CD4-positive, alpha-beta T cell (primary cell): ENCODE measurements at regions of chr6 and their contacts with region 1.

Region 1: DNA sequence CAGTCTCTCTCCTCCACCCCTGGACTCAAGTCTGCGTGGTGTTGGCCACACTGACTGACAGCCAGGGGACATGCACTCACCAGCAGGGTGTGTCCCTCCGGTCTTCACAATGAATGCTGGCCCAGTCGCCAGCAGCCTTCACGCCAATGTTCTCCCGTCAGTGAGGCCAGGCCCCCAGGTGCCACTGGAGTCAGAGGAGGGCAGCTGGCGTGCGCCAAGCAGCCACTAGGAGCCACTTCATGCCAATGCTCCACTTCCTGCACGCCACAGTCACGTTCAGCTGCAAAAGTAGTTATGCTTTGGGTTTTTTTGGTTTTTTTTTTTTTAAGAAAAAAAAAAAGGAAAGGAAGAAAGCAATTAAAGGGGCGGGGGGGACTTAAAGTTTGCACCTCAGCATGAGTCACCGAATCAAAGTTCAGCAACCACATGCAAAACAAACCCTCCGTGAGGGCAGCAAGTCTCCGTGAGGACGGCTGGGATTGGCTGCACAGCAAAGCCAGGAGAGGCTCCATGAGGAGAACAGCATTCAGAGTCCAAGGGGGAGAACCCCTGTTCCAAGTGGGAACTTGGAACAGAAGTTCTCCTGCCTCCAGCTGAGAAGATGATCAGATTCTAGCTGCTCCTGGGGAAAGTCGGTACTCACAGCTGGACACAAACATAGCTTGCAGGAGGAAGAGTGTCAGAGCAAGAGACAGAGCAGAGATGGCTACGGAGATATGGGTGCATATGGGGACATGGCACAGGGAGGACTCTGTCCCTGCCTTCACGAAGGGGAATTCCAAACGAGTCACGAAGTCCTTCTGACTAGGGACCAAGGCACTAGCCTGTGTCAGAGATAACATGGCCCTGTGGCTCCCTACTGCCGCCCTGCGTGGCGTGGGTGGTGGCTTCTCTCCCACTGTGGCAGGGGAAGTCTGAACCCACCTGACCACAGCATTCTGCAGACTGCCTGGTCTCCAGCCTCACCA is at the start of gene ZC3H12D:
- DNase-seq: peak; percentile 74 to 95 (median 81)
- ATAC-seq: peak; percentile 77
- H3K4me3 ChIP-seq: peak within 1 kb of the TSS; percentile 68
- H3K4me3 Mint-ChIP-seq: peak within 1 kb of the TSS; percentile 92
- H3K27ac ChIP-seq: peak within 1 kb of the TSS; percentile 91 to 97
- H3K27ac Mint-ChIP-seq: peak within 1 kb of the TSS; percentile 99
- H3K4me1 ChIP-seq: peaks cover 75% of the 10 kb centered on the region
- H3K4me1 Mint-ChIP-seq: peaks cover 61% of the 10 kb centered on the region
- H3K27me3 ChIP-seq: no peaks in the 10 kb centered on the region
- H3K27me3 Mint-ChIP-seq: no peaks in the 10 kb centered on the region
- CTCF ChIP-seq: peak; percentile 76
- total RNA-seq, gene ZC3H12D: 70.2 to 71.0 TPM

Region 2: GRCh38 chr6:149405823-149406765 is 78.9 kb before region 1 on chr6:
- CTCF ChIA-PET with region 1: no interaction called
- POLR2A ChIA-PET with region 1: no interaction called
- intact Hi-C with region 1: no loop called
- DNase-seq: peak in 2 of 14 experiments; percentile 30 to 31
- ATAC-seq: no peak
- H3K4me3 ChIP-seq: no peak overlapping the region
- H3K4me3 Mint-ChIP-seq: no peak overlapping the region
- H3K27ac ChIP-seq: no peak overlapping the region
- H3K27ac Mint-ChIP-seq: peak overlapping the region; percentile 41
- H3K4me1 ChIP-seq: no peaks in the 10 kb centered on the region
- H3K4me1 Mint-ChIP-seq: peaks cover 6% of the 10 kb centered on the region
- H3K27me3 ChIP-seq: no peaks in the 10 kb centered on the region
- H3K27me3 Mint-ChIP-seq: no peaks in the 10 kb centered on the region
- CTCF ChIP-seq: no peak

Region 3: GRCh38 chr6:149473080-149474052 is 11.7 kb before region 1 on chr6:
- CTCF ChIA-PET with region 1: interaction called, 12 read pairs
- POLR2A ChIA-PET with region 1: interaction called, 27 read pairs
- intact Hi-C with region 1: no loop called
- DNase-seq: peak in 4 of 14 experiments; percentile 27 to 62 (median 42)
- ATAC-seq: peak; percentile 61
- H3K4me3 ChIP-seq: peak overlapping the region; percentile 4
- H3K4me3 Mint-ChIP-seq: peak overlapping the region; percentile 60
- H3K27ac ChIP-seq: peak overlapping the region; percentile 3 to 27
- H3K27ac Mint-ChIP-seq: peak overlapping the region; percentile 82
- H3K4me1 ChIP-seq: peaks cover 94% of the 10 kb centered on the region
- H3K4me1 Mint-ChIP-seq: peaks cover 53% of the 10 kb centered on the region
- H3K27me3 ChIP-seq: no peaks in the 10 kb centered on the region
- H3K27me3 Mint-ChIP-seq: no peaks in the 10 kb centered on the region
- CTCF ChIP-seq: peak; percentile 3

Region 4: DNA sequence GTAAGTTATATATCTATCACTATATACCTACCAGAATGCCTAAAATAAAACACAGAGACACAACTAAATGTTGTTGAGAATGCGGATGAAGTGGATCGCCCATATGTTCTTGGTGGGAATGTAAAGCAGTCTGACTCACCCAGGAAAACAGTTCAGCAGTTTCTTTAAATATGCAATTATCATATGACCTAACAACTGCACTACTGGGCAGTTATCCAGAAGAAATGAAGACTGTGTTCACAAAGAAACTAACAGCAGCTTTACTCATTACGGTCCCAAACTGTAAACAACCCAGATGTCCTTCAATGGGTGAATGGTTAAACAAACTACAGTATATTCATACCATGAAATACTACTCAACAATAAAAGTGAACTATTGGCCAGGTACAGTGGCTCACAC is 14.0 kb after region 1 on chr6:
- CTCF ChIA-PET with region 1: interaction called, 10 read pairs
- POLR2A ChIA-PET with region 1: interaction called, 6 read pairs
- intact Hi-C with region 1: loop called (anchors 1 kb)
- DNase-seq: no peak
- ATAC-seq: no peak
- H3K4me3 ChIP-seq: no peak overlapping the region
- H3K4me3 Mint-ChIP-seq: no peak overlapping the region
- H3K27ac ChIP-seq: no peak overlapping the region
- H3K27ac Mint-ChIP-seq: peak overlapping the region; percentile 69
- H3K4me1 ChIP-seq: peaks cover 33% of the 10 kb centered on the region
- H3K4me1 Mint-ChIP-seq: peaks cover 62% of the 10 kb centered on the region
- H3K27me3 ChIP-seq: no peaks in the 10 kb centered on the region
- H3K27me3 Mint-ChIP-seq: no peaks in the 10 kb centered on the region
- CTCF ChIP-seq: no peak

Region 5: GRCh38 chr6:149508485-149508884 is 23.5 kb after region 1 on chr6:
- CTCF ChIA-PET with region 1: interaction called, 24 read pairs
- POLR2A ChIA-PET with region 1: interaction called, 21 read pairs
- intact Hi-C with region 1: loop called in 1 of 2 experiments (anchors 2 kb)
- DNase-seq: peak in 6 of 14 experiments; percentile 29 to 87 (median 66)
- ATAC-seq: peak; percentile 94
- H3K4me3 ChIP-seq: no peak overlapping the region
- H3K4me3 Mint-ChIP-seq: peak overlapping the region; percentile 30
- H3K27ac ChIP-seq: peak overlapping the region; percentile 11 to 18
- H3K27ac Mint-ChIP-seq: peak overlapping the region; percentile 87
- H3K4me1 ChIP-seq: no peaks in the 10 kb centered on the region
- H3K4me1 Mint-ChIP-seq: peaks cover 39% of the 10 kb centered on the region
- H3K27me3 ChIP-seq: no peaks in the 10 kb centered on the region
- H3K27me3 Mint-ChIP-seq: no peaks in the 10 kb centered on the region
- CTCF ChIP-seq: no peak